Heart left ventricle (tissue), 16 donors: ENCODE measurements at regions of chr11 and their contacts with region 1.

Region 1: GRCh38 chr11:13169709-13170108 is 107.9 kb upstream of the BMAL1 start:
- DNase-seq: no peak
- ATAC-seq: no peak
- H3K4me3 ChIP-seq: no peak overlapping the region
- H3K27ac ChIP-seq: no peak overlapping the region
- H3K4me1 ChIP-seq: no peaks in the 10 kb centered on the region
- H3K27me3 ChIP-seq: no peaks in the 10 kb centered on the region
- CTCF ChIP-seq: no peak
- POLR2A ChIP-seq: no peak

Region 2: DNA sequence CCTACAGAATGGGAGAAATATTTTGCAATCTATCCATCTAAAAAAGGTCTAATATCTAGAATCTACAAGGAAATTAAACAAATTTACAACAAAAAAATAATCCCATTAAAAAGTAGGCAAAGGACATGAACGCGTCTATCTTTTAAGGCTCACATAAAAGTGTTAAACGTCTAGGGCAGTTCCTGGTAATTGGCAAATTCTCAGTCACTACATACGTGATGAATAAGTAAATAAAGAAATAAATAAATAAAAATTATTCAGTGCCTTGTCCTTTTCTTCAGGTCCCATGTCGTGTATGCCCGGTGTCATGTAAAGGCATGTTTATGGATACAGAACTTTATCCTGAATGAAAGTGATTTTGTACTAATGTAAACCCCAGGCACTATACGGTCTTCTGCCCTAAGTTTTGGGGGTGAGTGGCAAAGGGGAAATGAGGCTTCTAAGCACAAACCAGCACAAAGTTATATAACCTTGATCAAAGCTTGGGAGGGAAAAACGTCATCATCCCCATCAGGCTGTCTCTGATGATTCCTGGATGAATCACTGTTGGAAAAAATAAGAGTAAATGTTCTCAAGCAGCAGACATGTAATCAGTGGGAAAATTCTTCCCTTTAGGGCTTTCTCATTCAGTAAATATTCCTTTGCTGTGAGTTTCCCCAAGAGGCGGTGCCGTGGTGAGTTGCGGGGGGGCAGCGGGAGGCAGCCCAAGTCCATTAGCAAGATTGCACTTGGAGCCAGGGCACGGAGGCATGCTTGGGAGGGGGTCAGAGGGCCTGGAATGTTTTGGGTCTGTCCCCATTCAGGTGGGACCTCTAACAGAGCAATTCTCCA is 1089.8 kb before region 1 on chr11:
- intact Hi-C with region 1: loop called in 1 of 10 experiments (anchors 10 kb)
- DNase-seq: peak; percentile 57 to 75 (median 73)
- ATAC-seq: peak; percentile 68 to 91 (median 84)
- H3K4me3 ChIP-seq: no peak overlapping the region
- H3K27ac ChIP-seq: peak overlapping the region in 11 of 12 donors; percentile 8 to 79 (median 60)
- H3K4me1 ChIP-seq: peaks cover 0 to 27% (median 0%) of the 10 kb centered on the region in 12 donors
- H3K27me3 ChIP-seq: no peaks in the 10 kb centered on the region
- CTCF ChIP-seq: no peak
- POLR2A ChIP-seq: no peak

Region 3: DNA sequence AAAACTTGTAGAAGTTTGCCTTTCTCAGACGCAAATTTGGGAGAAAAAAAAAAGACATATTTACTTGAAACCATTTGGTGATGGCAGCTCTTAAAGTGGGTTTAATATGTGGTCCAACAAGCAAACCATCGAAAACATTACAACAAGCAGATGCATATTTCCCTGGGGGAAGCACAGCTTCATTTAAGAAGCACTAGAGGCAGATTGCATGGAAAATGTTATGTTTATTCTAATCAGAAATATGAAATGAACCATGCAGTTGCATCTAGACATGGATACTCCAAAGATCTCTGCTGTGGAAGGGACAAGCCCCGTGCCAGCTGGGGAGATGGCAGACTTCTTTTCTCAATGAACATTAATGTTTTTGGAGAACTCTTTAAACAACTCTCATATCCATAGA is 849.7 kb before region 1 on chr11:
- intact Hi-C with region 1: loop called in 1 of 10 experiments (anchors 10 kb)
- DNase-seq: no peak
- ATAC-seq: no peak
- H3K4me3 ChIP-seq: no peak overlapping the region
- H3K27ac ChIP-seq: peak overlapping the region in 1 of 12 donors; percentile 75
- H3K4me1 ChIP-seq: peaks cover 0 to 11% (median 0%) of the 10 kb centered on the region in 12 donors
- H3K27me3 ChIP-seq: no peaks in the 10 kb centered on the region
- CTCF ChIP-seq: no peak
- POLR2A ChIP-seq: no peak